Calu3 (cell line): ENCODE measurements at regions of chr1 and their contacts with region 1.

Region 1: GRCh38 chr1:36703526-36704208 is 221.0 kb upstream of the CSF3R start:
- DNase-seq: peak; percentile 87
- H3K4me3 Mint-ChIP-seq: no peak overlapping the region
- H3K27ac Mint-ChIP-seq: no peak overlapping the region
- H3K4me1 Mint-ChIP-seq: peaks cover 5% of the 10 kb centered on the region
- H3K27me3 Mint-ChIP-seq: no peaks in the 10 kb centered on the region
- CTCF ChIP-seq: peak; percentile 71

Region 2: GRCh38 chr1:36924282-36924811 is 220.7 kb after region 1 on chr1:
- CTCF ChIA-PET with region 1: no interaction called
- intact Hi-C with region 1: loop called (anchors 10 kb)
- DNase-seq: peak; percentile 52
- H3K4me3 Mint-ChIP-seq: no peak overlapping the region
- H3K27ac Mint-ChIP-seq: no peak overlapping the region
- H3K4me1 Mint-ChIP-seq: no peaks in the 10 kb centered on the region
- H3K27me3 Mint-ChIP-seq: peaks cover 91% of the 10 kb centered on the region
- CTCF ChIP-seq: no peak

Region 3: GRCh38 chr1:37038227-37039076 is 334.8 kb after region 1 on chr1:
- CTCF ChIA-PET with region 1: no interaction called
- intact Hi-C with region 1: loop called (anchors 5 kb)
- DNase-seq: peak; percentile 18
- H3K4me3 Mint-ChIP-seq: no peak overlapping the region
- H3K27ac Mint-ChIP-seq: no peak overlapping the region
- H3K4me1 Mint-ChIP-seq: no peaks in the 10 kb centered on the region
- H3K27me3 Mint-ChIP-seq: peaks cover 96% of the 10 kb centered on the region
- CTCF ChIP-seq: no peak

Region 4: GRCh38 chr1:37177247-37177864 is 473.7 kb after region 1 on chr1:
- CTCF ChIA-PET with region 1: no interaction called
- intact Hi-C with region 1: loop called (anchors 1 kb)
- DNase-seq: peak; percentile 49
- H3K4me3 Mint-ChIP-seq: no peak overlapping the region
- H3K27ac Mint-ChIP-seq: no peak overlapping the region
- H3K4me1 Mint-ChIP-seq: no peaks in the 10 kb centered on the region
- H3K27me3 Mint-ChIP-seq: peaks cover 90% of the 10 kb centered on the region
- CTCF ChIP-seq: no peak

Region 5: DNA sequence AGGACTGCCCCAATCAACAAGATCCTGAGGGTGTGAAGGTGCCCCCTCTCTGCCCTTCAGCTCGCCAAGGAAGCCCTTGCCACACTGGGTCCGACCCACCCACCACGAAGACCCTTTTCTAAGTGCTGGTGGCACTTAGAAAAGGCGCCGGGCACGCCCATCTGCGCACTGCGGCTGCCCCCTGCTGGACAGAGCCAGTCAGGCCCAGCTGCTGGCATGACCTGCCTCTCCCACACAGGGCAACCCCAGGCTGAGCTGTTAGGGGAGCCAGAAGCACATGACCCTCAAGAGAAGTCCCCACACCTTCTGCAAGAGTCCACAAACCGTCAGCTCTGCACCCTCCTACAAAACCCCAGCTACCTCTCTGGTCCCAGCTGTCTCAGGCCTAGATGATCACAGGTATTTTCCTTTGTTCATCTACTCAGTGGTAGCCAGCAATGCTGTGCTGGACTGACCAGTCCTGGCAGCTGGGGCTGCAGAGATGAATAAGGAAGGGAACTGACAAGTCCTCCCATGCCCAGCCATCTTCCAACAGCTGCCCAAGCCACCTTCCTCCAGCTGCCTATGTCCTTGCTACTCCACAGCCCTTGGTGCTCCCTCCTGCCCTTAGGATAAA is 730.7 kb after region 1 on chr1:
- CTCF ChIA-PET with region 1: no interaction called
- intact Hi-C with region 1: loop called (anchors 5 kb)
- DNase-seq: peak; percentile 84
- H3K4me3 Mint-ChIP-seq: no peak overlapping the region
- H3K27ac Mint-ChIP-seq: no peak overlapping the region
- H3K4me1 Mint-ChIP-seq: no peaks in the 10 kb centered on the region
- H3K27me3 Mint-ChIP-seq: peaks cover 38% of the 10 kb centered on the region
- CTCF ChIP-seq: peak; percentile 88